Colonic mucosa (tissue), 4 donors: ENCODE measurements at regions of chr17 and their contacts with region 1.

Region 1: DNA sequence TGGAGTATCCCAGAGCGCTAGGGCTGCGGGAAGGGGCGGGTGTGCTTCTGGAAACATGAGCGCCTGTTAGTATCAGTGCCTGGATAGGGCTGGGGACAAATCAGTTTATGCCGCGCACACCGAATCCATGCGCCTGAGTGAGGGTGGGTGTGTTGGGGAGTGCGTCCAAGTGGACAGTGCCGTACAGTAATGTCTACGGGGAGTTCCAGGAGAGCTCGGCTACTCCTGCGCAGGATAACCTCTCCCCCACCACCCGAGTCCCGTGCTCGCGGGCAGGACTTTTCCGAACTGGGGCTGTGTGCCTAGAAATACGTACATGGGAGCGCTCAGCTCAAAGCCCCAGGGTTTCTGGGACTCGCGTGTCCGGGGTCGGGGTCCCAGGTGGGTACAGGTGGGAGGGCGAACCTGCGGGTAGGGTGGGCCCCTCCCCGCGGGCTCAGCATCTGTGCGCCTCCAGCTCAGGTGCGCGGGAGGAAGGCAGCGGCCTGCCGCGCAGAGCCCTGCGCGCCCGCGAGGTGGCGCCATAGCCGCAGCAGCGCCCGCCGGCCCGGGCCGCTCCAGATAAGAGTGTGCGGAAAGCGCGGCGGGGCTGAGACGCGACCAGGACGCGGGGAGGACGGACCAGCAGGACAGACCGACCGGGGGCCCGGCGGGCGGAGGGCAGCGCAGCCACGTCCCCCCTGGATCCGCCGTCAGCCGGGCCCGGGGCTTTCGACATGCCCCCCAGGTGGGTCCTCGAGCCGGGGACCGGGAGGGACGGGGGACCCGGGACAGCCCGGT is at the start of gene HIC1:
- DNase-seq: peak; percentile 71
- H3K4me3 ChIP-seq: peak within 1 kb of the TSS; percentile 59
- H3K27ac ChIP-seq: peak within 1 kb of the TSS; percentile 79
- H3K4me1 ChIP-seq: peaks cover 16% of the 10 kb centered on the region
- H3K27me3 ChIP-seq: peaks cover 54% of the 10 kb centered on the region
- CTCF ChIP-seq: peak; percentile 97
- total RNA-seq, gene HIC1: 7.0 to 11.2 TPM

Region 2: DNA sequence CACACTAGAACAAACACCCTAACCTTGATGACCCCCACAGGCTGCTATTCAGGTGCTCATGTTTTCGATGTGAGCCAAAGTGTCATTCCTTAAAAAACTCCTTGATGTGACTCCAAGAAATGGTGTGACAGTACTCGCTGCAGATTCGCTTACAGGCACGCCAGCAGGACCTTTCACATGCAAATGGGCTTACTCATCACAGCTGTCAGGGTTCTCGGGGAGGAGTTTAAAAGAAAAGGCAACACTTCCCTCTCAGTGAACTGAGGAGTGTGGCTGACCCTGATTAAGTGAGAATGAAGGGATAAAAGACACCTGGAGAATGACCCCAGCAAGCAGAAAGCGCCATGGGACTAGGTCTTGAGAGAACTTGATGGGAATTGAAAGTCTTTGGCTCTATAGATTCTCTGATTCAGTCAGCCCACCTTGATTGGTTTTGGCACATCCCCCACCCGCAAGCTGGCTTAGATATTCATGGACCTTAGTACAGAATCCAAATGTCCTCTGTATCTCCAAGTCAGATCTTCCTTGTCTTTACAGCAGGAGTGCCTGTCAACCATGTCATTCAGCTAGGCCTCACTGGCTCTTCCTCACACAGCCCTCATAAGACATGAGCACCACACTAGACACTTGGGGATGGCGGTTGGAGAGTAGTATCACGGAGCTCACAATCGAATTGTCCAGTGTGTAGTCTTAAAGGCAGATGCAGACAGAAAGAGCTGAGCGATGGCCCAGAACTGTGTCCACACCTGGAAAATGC is 82.8 kb after region 1 on chr17:
- intact Hi-C with region 1: no loop called
- DNase-seq: no peak
- H3K4me3 ChIP-seq: no peak overlapping the region
- H3K27ac ChIP-seq: peak overlapping the region; percentile 4
- H3K4me1 ChIP-seq: peaks cover 11% of the 10 kb centered on the region
- H3K27me3 ChIP-seq: no peaks in the 10 kb centered on the region
- CTCF ChIP-seq: no peak

Region 3: GRCh38 chr17:2172077-2172851 is 117.6 kb after region 1 on chr17:
- intact Hi-C with region 1: loop called (anchors 5 kb)
- DNase-seq: peak; percentile 63
- H3K4me3 ChIP-seq: no peak overlapping the region
- H3K27ac ChIP-seq: peak overlapping the region; percentile 69
- H3K4me1 ChIP-seq: no peaks in the 10 kb centered on the region
- H3K27me3 ChIP-seq: no peaks in the 10 kb centered on the region
- CTCF ChIP-seq: no peak

Region 4: DNA sequence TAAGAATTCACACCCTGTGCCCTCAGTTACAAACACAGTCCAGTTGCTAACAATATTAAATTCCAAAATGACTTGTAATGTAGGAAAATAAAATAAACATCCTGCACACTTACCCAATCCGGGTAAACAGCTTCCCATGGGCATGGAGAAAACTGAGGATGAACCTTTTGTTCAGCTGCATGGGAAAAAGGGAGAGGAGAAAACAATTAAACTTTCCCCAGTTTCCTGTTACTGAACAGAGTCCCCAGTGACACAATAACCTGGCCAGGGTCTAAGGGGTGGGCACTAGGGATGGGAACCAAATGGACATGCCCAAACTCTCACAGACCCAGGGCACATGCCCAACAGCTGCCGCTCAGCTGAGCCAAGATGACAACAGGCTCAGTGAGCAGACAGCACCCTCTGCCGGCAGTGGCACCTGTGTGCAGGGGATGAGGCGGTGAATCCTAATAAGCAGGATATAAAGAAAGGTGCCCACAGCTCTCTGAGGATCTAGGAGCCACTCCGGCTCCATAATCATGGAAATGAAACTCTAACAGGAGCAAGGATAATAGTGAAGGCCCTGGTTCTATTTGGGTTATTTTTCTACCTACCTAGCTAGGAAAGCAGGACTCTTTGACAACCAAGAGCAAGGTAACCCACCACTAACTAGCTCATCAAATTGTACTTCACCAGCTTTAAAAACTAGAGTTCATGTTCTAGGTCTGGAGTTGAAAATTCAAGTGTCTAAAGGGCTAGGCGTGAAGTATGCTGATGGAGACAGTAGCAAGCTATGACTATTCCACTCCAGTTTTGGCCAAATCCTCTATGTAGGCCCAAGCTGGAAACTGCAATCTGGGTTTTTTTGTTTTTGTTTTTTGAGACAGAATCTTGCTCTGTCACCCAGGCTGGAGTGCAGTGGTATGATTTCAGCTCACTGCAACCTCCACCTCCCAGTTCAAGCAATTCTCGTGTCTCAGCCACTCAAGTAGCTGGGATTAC is 190.1 kb after region 1 on chr17:
- intact Hi-C with region 1: loop called (anchors 2 kb)
- DNase-seq: peak; percentile 85
- H3K4me3 ChIP-seq: no peak overlapping the region
- H3K27ac ChIP-seq: peak overlapping the region; percentile 5
- H3K4me1 ChIP-seq: no peaks in the 10 kb centered on the region
- H3K27me3 ChIP-seq: no peaks in the 10 kb centered on the region
- CTCF ChIP-seq: peak; percentile 93

Region 5: DNA sequence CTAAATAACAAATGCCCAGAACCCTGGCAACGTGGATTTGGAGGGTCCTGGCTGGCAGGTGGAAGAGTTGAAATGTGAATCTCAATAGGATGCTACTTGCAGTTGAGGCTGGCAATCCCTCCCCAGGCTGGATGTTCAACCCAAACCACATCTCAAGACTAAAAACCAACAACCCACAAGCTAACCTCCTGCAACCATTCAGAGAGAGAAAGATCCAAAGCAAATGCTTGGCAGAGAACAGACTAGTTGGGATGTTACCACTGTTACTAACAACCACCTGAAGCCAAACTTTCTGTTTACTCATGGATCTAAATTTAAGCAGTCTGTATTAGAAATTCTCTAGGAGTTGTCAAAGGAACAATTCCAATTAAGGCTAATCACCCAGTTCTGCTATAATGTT is 221.0 kb after region 1 on chr17:
- intact Hi-C with region 1: loop called (anchors 10 kb)
- DNase-seq: no peak
- H3K4me3 ChIP-seq: no peak overlapping the region
- H3K27ac ChIP-seq: no peak overlapping the region
- H3K4me1 ChIP-seq: no peaks in the 10 kb centered on the region
- H3K27me3 ChIP-seq: no peaks in the 10 kb centered on the region
- CTCF ChIP-seq: no peak